ENCODE measurements at regions of chr15 and their contacts with region 1.

Region 1: GRCh38 chr15:91852741-91853510 is 582 bp upstream of the SLCO3A1 start:
- DNase-seq: peak; percentile 79
- H3K4me3 ChIP-seq: peak overlapping the region; percentile 41 to 79 (median 72)
- H3K27ac ChIP-seq: peak overlapping the region; percentile 87 to 92 (median 90)
- H3K4me1 ChIP-seq: peaks cover 10 to 44% (median 29%) of the 10 kb centered on the region in 4 donors
- H3K27me3 ChIP-seq: no peaks in the 10 kb centered on the region
- CTCF ChIP-seq: peak; percentile 67 to 75 (median 72)
- EP300 ChIP-seq: no peak
- POLR2A ChIP-seq: peak; percentile 34

Region 2: DNA sequence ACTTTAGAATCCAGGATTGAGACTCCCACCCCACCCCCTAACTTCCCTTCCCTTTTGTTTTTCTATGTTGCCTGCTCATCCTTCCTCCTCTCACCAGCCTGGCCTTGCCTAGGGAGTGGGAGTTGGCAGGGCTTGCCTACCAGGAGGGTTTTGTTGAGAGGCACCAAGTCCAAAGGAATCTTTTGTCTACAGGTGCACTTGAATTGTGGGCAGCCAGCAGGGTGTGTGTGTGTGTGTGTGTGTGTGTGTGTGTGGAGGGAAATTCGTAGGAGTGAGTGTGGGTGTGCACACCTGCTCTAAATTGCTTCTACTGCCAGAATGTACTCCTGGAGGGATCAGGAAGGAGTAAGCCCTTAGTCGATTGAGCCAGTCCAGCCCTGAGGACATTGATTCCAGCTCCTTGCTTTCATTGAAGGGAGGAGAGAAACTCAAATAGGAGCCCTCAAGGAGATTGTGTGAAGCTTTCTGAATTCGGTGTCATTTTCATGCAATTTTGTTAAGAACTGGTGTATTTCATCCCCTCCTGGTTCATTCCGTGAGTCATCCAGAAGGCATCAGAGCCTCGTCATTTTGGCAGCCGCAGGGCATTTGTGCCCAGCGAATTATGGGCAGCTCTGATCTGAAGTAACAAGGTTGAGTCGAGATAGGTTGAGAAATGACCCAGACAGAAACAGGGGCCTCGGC is 112.7 kb after region 1 on chr15:
- in situ Hi-C with region 1: loop called in 1 of 4 experiments (anchors 25 kb)
- intact Hi-C with region 1: no loop called
- DNase-seq: no peak
- H3K4me3 ChIP-seq: no peak overlapping the region
- H3K27ac ChIP-seq: no peak overlapping the region
- H3K4me1 ChIP-seq: no peaks in the 10 kb centered on the region
- H3K27me3 ChIP-seq: no peaks in the 10 kb centered on the region
- CTCF ChIP-seq: no peak
- EP300 ChIP-seq: no peak
- POLR2A ChIP-seq: no peak

Measured in transverse colon (tissue), 4 donors.